ENCODE measurements at regions of chr19 and their contacts with region 1.

Region 1: GRCh38 chr19:8615813-8616596 is 5.5 kb upstream of the ADAMTS10 start:
- H3K4me3 Mint-ChIP-seq: no peak overlapping the region
- H3K27ac Mint-ChIP-seq: no peak overlapping the region
- H3K4me1 Mint-ChIP-seq: no peaks in the 10 kb centered on the region
- H3K27me3 Mint-ChIP-seq: peaks cover 34% of the 10 kb centered on the region

Region 2: GRCh38 chr19:8641908-8642547 is 26.0 kb after region 1 on chr19:
- intact Hi-C with region 1: loop called (anchors 2 kb)
- H3K4me3 Mint-ChIP-seq: no peak overlapping the region
- H3K27ac Mint-ChIP-seq: no peak overlapping the region
- H3K4me1 Mint-ChIP-seq: peaks cover 86% of the 10 kb centered on the region
- H3K27me3 Mint-ChIP-seq: no peaks in the 10 kb centered on the region

Region 3: GRCh38 chr19:8654591-8655339 is 38.8 kb after region 1 on chr19:
- intact Hi-C with region 1: loop called (anchors 2 kb)
- H3K4me3 Mint-ChIP-seq: peak overlapping the region; percentile 67
- H3K27ac Mint-ChIP-seq: no peak overlapping the region
- H3K4me1 Mint-ChIP-seq: peaks cover 31% of the 10 kb centered on the region
- H3K27me3 Mint-ChIP-seq: peaks cover 25% of the 10 kb centered on the region

Region 4: DNA sequence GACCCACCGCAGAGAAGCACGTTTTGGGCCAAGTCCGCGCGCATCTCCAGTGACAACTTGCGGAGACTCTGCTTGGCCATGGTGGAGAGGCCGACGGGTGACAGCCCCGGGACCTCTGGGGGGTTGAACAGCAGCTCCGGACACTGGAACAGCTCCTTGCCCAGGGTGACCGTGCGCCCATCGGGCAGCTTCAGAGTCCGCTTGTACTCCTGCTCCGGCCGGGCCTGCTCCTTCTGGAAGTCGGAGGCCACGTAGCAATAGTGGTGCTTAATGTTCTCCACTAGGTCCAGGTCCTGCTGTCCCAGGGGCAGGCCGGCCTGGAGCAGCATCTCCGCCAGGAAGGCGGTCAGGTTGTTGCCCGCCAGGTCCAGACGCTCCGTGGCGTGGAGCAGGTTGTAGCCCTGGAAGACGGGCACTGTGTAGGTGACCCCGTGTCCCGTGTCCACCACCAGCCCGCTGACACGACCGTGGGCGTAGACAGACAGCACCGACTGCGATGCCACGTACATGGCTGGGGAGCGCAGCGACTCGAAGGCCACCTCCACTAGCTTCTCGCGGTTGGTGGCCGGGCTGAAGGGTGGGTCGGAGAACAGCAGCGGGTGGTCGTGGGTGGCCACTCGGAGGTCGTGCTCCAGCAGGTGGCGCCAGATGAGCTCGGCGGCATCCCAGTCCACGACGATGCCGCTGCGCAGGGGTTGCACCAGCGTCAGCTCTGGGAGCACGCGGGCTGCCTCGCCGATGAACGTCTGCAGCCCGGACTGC is 81.8 kb after region 1 on chr19:
- intact Hi-C with region 1: loop called (anchors 1 kb)
- H3K4me3 Mint-ChIP-seq: no peak overlapping the region
- H3K27ac Mint-ChIP-seq: no peak overlapping the region
- H3K4me1 Mint-ChIP-seq: peaks cover 8% of the 10 kb centered on the region
- H3K27me3 Mint-ChIP-seq: peaks cover 66% of the 10 kb centered on the region